Heart right ventricle (tissue), 16 donors: ENCODE measurements at regions of chr2 and their contacts with region 1.

Region 1: DNA sequence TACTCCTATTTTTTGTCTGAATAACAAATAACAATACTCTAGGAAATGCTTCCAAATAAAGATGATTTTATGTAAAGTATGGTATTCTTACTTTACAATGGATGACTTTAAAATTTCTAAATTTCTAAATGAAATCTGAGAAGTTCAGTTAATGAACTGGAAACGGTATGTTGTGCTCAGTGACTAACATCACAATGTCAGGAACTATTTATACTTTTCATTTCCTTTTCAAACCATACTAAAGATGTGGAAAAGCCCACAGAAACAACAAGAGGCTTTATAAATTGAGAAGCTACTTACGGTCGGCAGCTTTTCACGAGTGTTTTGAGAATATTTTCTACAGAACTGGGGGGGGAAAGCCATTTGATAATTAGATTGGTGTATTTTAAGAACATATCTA is 31.1 kb downstream of the PSME4 start:
- DNase-seq: no peak
- ATAC-seq: no peak
- H3K4me3 ChIP-seq: no peak overlapping the region
- H3K27ac ChIP-seq: no peak overlapping the region
- H3K4me1 ChIP-seq: peaks cover 0 to 9% (median 3%) of the 10 kb centered on the region in 9 donors
- H3K27me3 ChIP-seq: no peaks in the 10 kb centered on the region
- CTCF ChIP-seq: no peak

Region 2: GRCh38 chr2:53880756-53881155 is 58.9 kb before region 1 on chr2:
- intact Hi-C with region 1: loop called in 1 of 10 experiments (anchors 10 kb)
- DNase-seq: no peak
- ATAC-seq: no peak
- H3K4me3 ChIP-seq: no peak overlapping the region
- H3K27ac ChIP-seq: no peak overlapping the region
- H3K4me1 ChIP-seq: no peaks in the 10 kb centered on the region
- H3K27me3 ChIP-seq: no peaks in the 10 kb centered on the region
- CTCF ChIP-seq: no peak